GM13977 (cell line): ENCODE measurements at regions of chr6 and their contacts with region 1.

Region 1: DNA sequence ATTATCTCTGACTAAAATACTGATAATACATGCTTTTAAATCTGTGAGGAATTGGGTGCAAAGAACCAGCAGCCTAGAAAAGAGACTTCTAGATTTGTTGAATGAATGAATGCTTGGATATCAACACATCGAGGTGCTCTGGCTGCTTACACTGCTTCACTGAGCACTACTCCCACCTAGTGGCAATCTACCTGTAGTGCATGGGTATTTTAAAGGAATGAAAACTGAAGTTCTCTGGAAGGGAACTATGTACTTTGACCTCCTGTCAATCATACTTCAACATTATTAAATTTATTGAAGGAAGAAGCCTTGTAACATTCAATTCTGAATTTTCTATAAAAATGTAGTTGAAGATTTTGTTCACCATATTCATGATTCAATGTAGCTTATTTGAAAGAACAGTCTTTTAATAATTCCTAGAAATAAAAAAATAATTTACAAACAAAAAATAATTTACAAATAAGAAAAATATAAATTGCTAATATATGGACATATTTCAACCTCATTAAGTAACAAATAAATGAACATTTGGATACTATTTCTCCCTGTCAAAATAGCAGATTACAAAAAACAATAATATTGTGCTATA is 111.2 kb upstream of the MMS22L start:
- DNase-seq: peak; percentile 49
- CTCF ChIP-seq: peak; percentile 84

Region 2: GRCh38 chr6:97068211-97068610 is 326.0 kb before region 1 on chr6:
- in situ Hi-C with region 1: loop called (anchors 10 kb)
- DNase-seq: no peak
- CTCF ChIP-seq: peak; percentile 52

Region 3: GRCh38 chr6:97195117-97195516 is 199.1 kb before region 1 on chr6:
- in situ Hi-C with region 1: loop called (anchors 10 kb)
- DNase-seq: no peak
- CTCF ChIP-seq: no peak